IMR-90 (cell line): ENCODE measurements at regions of chrX and their contacts with region 1.

Region 1: GRCh38 chrX:74458735-74459134 is 37.4 kb downstream of the SLC16A2 start:
- DNase-seq: peak; percentile 77
- ATAC-seq: peak; percentile 74
- H3K4me3 ChIP-seq: no peak overlapping the region
- H3K27ac ChIP-seq: no peak overlapping the region
- H3K4me1 ChIP-seq: no peaks in the 10 kb centered on the region
- H3K27me3 ChIP-seq: no peaks in the 10 kb centered on the region; the same call in 1 of the 2 replicates
- CTCF ChIP-seq: peak; percentile 47
- POLR2A ChIP-seq: no peak
- RAD21 ChIP-seq: peak; percentile 51

Region 2: DNA sequence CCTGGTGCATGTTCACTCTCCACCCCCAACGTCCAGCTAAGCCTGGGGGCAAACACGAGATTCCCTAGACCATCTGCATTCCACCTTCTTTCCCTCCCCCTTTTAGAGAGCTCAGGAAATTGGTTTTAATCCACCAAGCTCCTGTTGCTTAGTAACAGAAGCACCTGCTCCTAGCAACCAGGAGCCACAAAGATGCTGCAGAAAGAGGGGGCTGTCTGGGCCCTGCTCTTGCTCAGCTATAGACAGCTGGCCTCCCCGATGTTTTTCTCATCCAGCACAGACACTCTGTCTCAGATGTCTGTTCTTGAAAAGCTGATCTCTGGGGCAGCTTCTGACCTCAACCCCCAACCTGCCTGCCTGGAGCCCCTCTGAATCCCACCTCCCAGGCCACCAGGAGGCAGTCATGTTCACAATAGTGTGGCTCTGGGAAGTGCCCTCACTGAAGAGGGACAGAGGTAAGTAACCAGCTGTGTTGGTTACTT is 34.0 kb after region 1 on chrX:
- CTCF ChIA-PET with region 1: no interaction called
- POLR2A ChIA-PET with region 1: no interaction called
- dilution Hi-C with region 1: no loop called
- in situ Hi-C with region 1: no loop called
- intact Hi-C with region 1: no loop called
- DNase-seq: no peak
- ATAC-seq: no peak
- H3K4me3 ChIP-seq: no peak overlapping the region
- H3K27ac ChIP-seq: no peak overlapping the region
- H3K4me1 ChIP-seq: no peaks in the 10 kb centered on the region
- H3K27me3 ChIP-seq: peaks cover 4% of the 10 kb centered on the region; the same call in 1 of the 2 replicates
- CTCF ChIP-seq: peak; percentile 13; the same call in 1 of the 2 replicates
- POLR2A ChIP-seq: no peak
- RAD21 ChIP-seq: no peak; the same call in 1 of the 2 replicates

Region 3: DNA sequence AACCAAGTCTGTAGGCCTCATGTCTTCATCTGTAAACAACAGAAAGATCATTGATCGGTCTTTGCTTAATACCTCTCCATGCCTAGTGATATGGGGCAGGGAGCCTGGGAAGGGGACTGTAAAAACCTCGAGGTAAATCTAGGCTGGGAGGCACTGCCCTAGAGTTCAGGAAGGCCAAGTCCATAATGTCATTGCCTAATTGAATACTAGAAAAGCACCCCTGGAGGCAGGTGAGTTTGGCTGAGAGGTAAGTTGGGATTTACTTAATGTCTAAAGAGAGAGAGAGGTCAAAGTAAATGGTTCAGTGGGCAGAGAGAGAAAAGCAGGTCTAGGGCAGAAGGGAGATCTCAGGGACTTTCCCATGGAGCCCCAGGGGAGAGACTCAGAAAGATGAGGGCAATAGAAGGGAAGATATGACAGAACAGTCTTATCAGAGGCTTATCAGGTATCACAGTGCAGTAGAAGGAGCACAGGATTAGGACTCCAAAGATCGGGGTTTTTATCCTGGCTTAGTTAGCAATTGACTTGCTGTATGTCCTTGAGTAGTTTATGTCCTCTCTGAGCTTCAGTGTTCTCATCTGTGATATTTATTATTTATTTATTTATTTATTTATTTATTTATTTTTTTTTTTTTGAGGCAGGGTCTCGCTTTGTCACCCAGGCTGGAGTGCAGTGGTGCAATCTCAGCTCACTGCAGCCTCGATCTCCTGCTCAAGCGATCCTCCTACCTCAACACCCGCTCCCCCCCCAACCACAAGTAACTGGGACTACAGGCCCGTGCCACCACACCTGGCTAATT is 47.8 kb after region 1 on chrX:
- CTCF ChIA-PET with region 1: no interaction called
- POLR2A ChIA-PET with region 1: no interaction called
- dilution Hi-C with region 1: no loop called
- in situ Hi-C with region 1: no loop called
- intact Hi-C with region 1: loop called (anchors 1 kb)
- DNase-seq: no peak
- ATAC-seq: no peak
- H3K4me3 ChIP-seq: no peak overlapping the region
- H3K27ac ChIP-seq: no peak overlapping the region
- H3K4me1 ChIP-seq: no peaks in the 10 kb centered on the region
- H3K27me3 ChIP-seq: peaks cover 6% of the 10 kb centered on the region
- CTCF ChIP-seq: no peak
- POLR2A ChIP-seq: no peak
- RAD21 ChIP-seq: no peak